Vagina (tissue), 2 donors: ENCODE measurements at regions of chr17 and their contacts with region 1.

Region 1: DNA sequence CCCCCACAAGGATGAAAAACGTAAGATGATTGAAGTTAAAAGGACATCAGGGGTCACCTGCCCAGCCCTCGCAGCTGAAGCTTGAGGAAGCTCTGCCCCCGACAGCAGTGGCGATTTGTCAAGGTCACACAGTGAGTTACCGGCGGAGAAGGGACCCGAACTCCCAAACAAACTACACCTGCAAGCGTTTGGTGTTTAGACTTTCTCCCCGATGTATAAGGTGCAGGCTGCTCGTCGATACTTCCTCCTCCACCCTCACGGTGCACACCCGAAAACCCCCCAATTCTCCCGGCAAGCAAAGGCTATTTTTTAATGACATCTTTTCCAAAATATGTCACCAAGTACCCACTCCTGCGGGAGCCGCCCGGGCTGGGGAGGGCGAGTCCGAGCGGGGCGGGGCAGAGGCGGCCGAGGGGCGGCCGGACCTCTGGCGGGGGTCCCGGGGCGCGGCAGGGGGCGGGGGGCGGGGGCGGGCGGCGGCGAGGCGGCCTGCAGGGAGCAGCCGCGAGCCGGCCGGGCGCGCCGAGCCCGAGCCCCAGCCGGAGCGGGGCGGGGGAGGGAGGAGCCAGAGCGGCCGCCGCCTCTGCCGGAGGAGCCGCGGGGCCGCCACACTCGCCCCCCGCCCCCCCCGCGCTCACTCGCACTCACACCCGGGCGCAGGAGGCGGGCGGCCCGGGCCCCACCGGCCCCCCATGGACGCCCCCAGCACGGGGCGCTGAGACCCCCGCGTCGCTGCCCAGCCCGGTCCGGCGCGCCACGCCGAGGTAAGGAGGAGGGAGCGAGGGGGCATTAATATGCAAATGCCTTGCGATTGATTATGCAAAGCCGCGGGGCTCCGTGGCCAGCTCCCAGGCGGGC is at the start of gene THRA:
- DNase-seq: no peak
- H3K4me3 ChIP-seq: peak within 1 kb of the TSS; percentile 98 to 100
- H3K27ac ChIP-seq: peak within 1 kb of the TSS; percentile 99
- H3K4me1 ChIP-seq: peaks cover 58% of the 10 kb centered on the region
- H3K27me3 ChIP-seq: no peaks in the 10 kb centered on the region
- CTCF ChIP-seq: no peak
- POLR2A ChIP-seq: peak in 1 of 2 donors; percentile 47
- total RNA-seq, gene THRA: 40.3 TPM

Region 2: DNA sequence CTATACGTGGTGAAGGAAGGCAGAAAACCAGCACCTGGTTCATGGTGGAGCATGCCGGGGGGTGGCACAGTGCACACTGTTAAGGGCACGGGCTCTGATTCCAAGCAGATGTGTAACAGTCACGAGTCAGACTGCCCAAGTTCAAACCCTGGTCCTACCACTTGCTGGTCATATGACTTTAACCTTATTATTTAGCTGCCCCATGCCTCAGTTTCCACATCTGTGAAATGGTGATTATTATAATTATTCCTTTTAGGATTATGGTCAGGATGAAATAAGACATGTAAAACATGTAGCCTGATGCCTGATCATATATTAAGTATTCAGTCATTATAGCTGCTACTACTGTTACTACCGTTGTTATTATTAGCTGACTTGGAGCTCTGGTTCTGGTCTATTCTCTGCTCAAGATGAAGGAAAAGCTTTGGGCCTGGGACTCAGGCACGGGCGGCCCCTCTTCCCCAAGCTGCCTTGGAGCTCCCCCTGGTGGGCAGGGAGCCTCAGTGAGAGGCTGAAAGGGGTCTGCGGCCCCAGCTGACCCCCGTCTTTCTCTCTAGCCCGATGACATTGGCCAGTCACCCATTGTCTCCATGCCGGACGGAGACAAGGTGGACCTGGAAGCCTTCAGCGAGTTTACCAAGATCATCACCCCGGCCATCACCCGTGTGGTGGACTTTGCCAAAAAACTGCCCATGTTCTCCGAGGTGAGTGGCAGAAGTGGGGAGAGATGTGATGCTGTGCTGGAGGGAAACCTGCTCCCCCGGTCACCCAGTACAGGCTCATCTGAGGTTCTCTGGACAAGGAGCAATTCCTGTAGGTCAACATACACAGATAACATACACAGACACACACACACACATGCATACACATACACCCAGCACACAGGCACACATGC is 23.8 kb after region 1 on chr17:
- intact Hi-C with region 1: loop called (anchors 2 kb)
- DNase-seq: no peak
- H3K4me3 ChIP-seq: no peak overlapping the region
- H3K27ac ChIP-seq: peak overlapping the region; percentile 63
- H3K4me1 ChIP-seq: peaks cover 15% of the 10 kb centered on the region
- H3K27me3 ChIP-seq: no peaks in the 10 kb centered on the region
- CTCF ChIP-seq: peak; percentile 60 to 65 (median 63)
- POLR2A ChIP-seq: no peak

Region 3: GRCh38 chr17:40177275-40177874 is 114.8 kb after region 1 on chr17 and contains the start of gene RAPGEFL1:
- intact Hi-C with region 1: loop called (anchors 10 kb)
- DNase-seq: no peak
- H3K4me3 ChIP-seq: peak within 1 kb of the TSS; percentile 73
- H3K27ac ChIP-seq: peak within 1 kb of the TSS; percentile 74
- H3K4me1 ChIP-seq: peaks cover 29% of the 10 kb centered on the region
- H3K27me3 ChIP-seq: no peaks in the 10 kb centered on the region
- CTCF ChIP-seq: no peak
- POLR2A ChIP-seq: peak in 1 of 2 donors; percentile 36
- total RNA-seq, gene RAPGEFL1: 144 TPM